ENCODE measurements at regions of chr16 and their contacts with region 1.

Region 1: DNA sequence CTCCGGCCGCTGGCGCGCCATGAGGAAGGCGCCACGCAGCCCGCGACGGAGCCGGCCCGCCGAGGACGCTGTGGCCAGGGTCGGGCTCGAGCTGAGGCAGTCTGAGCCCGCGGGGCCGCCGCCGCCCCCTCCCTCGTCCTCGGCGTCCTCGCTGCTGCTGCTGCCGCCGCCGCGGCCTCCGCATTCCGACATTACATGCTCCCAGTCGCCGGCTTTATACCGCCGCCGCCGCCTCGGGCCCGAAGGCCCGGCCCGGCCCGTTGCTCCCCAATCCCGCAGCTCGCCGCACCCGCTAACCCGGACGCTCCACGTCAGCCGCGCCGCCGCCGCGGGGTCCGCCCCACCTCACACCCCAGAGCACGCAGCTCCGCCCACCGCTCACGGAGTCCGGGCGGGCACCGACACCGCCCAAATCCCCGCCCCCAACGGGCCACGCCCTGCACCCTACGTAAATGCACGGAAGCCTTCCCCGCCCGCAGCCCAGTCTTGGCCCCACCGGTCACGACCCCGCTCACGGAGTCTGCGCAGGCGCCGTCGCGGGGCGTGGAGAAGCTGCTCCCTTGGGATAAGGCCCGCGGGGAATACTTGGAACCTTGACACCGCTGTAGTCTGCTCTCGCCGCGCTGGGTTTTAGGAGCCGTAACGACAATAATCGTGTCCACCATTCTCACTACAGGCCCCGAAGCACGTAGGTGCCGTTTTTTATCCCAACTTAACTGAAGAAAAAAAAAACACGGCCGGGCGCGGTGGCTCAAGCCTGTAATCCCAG is at the start of gene TXNDC11:
- DNase-seq: peak; percentile 100
- H3K4me3 Mint-ChIP-seq: peak within 1 kb of the TSS; percentile 98
- H3K27ac Mint-ChIP-seq: peak within 1 kb of the TSS; percentile 97
- H3K4me1 Mint-ChIP-seq: peaks cover 48% of the 10 kb centered on the region
- H3K27me3 Mint-ChIP-seq: no peaks in the 10 kb centered on the region
- total RNA-seq, gene TXNDC11: 41.7 and 43.6 TPM in 2 replicates

Region 2: GRCh38 chr16:10944249-10945064 is 798.3 kb before region 1 on chr16 and contains the start of gene CLEC16A:
- intact Hi-C with region 1: loop called (anchors 5 kb)
- DNase-seq: peak; percentile 99
- H3K4me3 Mint-ChIP-seq: peak within 1 kb of the TSS; percentile 84
- H3K27ac Mint-ChIP-seq: peak within 1 kb of the TSS; percentile 79
- H3K4me1 Mint-ChIP-seq: peaks cover 56% of the 10 kb centered on the region
- H3K27me3 Mint-ChIP-seq: no peaks in the 10 kb centered on the region
- total RNA-seq, gene CLEC16A: 35.9 and 36.2 TPM in 2 replicates

Region 3: DNA sequence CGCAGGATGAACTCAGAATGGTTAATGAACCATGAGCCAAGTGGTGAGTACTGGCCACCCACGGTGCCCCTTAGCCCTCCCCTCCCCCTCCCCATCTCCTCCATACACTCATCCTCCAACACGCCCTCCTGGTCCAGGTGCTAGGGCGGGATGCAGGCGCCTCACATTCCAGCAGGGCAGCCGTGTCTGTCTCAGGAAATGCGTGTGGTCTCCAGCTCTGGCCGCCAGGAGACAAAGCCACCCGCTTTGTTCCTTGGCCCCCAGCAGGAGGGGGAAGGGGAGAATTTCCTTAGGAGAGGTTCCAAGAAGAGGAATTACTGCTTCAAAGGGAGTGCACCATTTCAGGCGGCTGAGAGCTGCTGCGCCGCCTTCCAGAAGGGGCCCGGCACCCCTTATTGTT is 427.2 kb before region 1 on chr16:
- intact Hi-C with region 1: no loop called
- DNase-seq: no peak
- H3K4me3 Mint-ChIP-seq: no peak overlapping the region
- H3K27ac Mint-ChIP-seq: no peak overlapping the region
- H3K4me1 Mint-ChIP-seq: peaks cover 54% of the 10 kb centered on the region
- H3K27me3 Mint-ChIP-seq: no peaks in the 10 kb centered on the region

Region 4: DNA sequence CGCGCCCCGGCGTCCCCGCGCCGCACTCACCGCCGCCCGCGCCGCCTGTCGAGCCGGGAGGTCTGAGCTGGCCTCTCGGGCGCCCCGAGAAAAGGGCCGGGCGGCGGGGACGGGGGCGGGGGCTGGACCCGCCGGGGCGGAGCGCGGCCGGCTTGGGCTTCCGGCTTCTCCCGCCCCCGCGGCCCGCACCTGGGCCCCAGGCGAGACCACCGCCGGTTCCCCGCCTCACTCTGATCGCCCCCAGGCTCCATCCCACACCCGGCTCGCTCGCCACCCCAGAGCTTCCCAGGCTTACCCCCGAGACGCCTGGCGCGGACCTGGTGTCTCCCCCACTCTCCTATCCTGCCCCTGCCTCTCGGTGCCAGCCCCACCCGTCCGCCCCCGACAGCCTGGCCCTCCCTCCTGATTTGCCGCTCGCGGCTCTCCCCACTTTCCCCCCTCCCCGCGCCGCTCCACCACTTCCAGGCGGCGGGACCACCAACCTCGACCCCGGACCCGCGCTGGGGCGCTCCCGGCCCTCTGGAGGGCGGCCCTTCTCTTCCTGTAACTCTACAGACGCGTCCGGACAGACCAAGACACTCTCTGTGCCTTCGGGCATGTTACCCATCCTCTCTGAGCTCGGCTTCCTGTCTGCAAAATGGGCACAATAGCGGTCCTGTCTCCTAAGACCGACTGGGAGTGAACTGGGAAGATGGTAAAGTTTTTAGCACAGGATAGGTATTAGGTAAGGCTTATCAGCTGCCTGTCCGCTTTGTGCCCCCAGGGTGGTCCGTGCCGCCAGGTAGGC is 155.7 kb before region 1 on chr16 and contains the start of gene LITAF:
- intact Hi-C with region 1: loop called (anchors 5 kb)
- DNase-seq: peak; percentile 87
- H3K4me3 Mint-ChIP-seq: peak within 1 kb of the TSS; percentile 90
- H3K27ac Mint-ChIP-seq: peak within 1 kb of the TSS; percentile 89
- H3K4me1 Mint-ChIP-seq: peaks cover 38% of the 10 kb centered on the region
- H3K27me3 Mint-ChIP-seq: peaks cover 3% of the 10 kb centered on the region
- total RNA-seq, gene LITAF: 163 and 170 TPM in 2 replicates

Region 5: GRCh38 chr16:11669380-11670146 is 73.2 kb before region 1 on chr16:
- intact Hi-C with region 1: loop called (anchors 2 kb)
- DNase-seq: peak; percentile 62
- H3K4me3 Mint-ChIP-seq: peak overlapping the region; percentile 80
- H3K27ac Mint-ChIP-seq: peak overlapping the region; percentile 80
- H3K4me1 Mint-ChIP-seq: peaks cover 58% of the 10 kb centered on the region
- H3K27me3 Mint-ChIP-seq: no peaks in the 10 kb centered on the region

Region 6: DNA sequence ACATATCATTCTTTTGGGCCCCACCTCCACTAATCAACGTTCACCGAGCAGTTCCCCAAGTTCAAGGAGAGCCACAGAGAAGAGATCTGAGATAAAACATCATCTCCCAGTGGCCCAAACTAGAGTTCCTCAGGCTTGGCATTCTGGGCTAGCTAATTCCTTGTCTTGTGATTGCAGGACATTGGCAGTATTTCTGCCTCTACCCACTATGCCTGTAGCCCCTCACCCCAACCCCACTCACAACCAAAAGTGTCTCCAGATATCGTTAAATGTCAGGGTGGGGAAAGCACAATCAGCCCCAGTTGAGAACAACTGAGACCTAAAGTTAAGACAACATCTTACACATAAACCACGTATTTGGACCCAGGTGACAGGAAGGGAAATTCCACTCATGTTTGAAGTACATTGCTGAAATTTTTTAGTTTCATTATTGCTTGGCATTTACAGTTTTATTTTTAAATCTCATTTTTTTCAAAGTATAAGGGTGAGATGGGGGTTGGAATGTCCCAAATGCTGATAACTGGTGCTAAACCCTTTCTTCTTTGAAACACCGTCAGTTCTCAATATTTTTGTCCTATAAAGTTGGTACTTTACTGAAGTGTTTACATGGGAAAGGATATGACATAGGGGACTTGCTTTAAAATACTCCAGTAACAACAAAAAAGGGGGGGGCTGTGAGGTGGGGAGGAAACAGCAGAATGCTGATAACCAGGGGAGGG is 40.8 kb after region 1 on chr16:
- intact Hi-C with region 1: loop called (anchors 1 kb)
- DNase-seq: peak; percentile 89
- H3K4me3 Mint-ChIP-seq: peak overlapping the region; percentile 82
- H3K27ac Mint-ChIP-seq: peak overlapping the region; percentile 97
- H3K4me1 Mint-ChIP-seq: peaks cover 61% of the 10 kb centered on the region
- H3K27me3 Mint-ChIP-seq: no peaks in the 10 kb centered on the region

Region 7: DNA sequence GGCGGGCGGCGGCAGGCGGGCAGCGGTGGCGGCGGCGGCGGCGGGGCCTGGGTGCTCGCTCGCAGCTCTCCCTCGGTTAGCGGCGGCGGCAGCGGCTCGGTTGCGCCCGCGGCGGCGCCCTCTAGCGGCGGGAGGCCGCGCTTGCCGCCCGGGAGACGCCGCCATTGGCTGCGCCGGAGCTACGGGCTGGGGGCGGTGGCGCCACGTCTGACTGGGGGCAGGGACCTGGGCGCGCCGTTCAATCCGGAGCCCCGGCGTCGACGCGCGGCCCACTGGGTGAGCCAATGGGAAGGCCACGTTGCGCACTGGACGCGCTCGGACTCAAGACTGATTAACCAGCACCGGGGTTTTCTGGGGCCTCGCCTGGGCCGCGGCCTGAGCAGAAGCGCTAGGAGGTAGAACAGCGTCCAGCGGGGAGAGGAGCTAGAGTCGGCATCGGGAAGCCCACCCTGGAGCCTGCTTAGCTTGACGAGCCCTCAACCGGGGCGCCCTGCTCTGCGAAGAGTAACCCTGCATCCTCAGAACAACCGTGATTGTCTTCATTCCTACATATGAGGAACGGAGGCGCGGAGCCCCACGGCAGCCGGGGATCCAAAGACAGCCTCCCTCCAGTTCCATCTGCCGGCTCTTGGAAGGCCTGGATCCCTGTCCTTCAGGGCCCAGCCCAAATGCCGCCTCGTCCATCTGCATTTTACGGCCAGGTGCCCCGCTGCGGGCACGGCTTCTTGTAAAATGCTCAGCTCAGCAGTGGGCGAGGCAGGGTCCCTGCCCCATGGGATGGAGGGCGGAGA is 54.6 kb after region 1 on chr16 and contains the start of gene ZC3H7A:
- intact Hi-C with region 1: loop called (anchors 1 kb)
- DNase-seq: peak; percentile 98
- H3K4me3 Mint-ChIP-seq: peak within 1 kb of the TSS; percentile 93
- H3K27ac Mint-ChIP-seq: peak within 1 kb of the TSS; percentile 95
- H3K4me1 Mint-ChIP-seq: peaks cover 69% of the 10 kb centered on the region
- H3K27me3 Mint-ChIP-seq: no peaks in the 10 kb centered on the region
- total RNA-seq, gene ZC3H7A: 58.3 and 64.1 TPM in 2 replicates

Region 8: DNA sequence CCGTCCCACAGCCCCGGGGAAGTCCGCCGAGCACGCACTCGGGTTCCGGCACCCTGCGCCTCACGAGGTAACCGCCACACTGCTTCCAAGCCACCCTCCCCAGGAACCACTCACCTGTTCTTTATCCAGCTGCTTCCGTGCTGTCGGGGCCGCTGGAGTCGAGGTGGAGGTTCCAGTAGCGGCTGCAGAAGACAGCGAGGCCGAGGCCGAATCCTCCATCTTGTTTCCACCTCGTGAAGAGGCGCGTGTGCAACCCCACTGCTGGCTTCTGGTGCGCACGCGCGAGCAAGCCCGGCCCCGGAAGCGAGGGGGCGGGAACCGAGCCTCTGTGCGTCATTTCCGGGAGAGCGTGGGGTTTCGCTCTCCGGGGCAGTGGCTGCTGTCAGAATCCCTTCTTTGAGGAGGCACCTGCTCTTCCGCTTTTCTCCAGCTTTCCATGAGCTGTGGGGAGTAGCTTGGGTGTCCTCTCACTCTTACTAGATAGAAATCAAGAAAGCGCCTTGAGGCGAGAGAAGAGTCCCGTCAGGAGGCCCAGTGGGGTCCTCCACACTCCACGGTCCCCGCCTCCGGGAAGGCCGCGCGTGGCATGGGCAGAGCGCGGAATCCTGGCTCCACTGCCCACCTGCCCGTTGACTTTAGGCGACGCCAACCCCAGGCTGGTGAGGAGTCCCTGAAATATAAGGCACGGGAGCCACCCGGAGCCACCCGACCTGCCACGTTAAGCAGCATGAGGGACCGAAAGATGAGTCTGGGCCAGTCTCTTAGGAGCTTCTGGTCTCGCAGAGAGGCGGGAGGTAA is 108.8 kb after region 1 on chr16 and contains the start of gene RSL1D1:
- intact Hi-C with region 1: loop called (anchors 1 kb)
- DNase-seq: peak; percentile 99
- H3K4me3 Mint-ChIP-seq: peak within 1 kb of the TSS; percentile 99
- H3K27ac Mint-ChIP-seq: peak within 1 kb of the TSS; percentile 98
- H3K4me1 Mint-ChIP-seq: peaks cover 47% of the 10 kb centered on the region
- H3K27me3 Mint-ChIP-seq: no peaks in the 10 kb centered on the region
- total RNA-seq, gene RSL1D1: 375 and 379 TPM in 2 replicates

Region 9: GRCh38 chr16:12132290-12132689 is 389.6 kb after region 1 on chr16:
- intact Hi-C with region 1: no loop called
- DNase-seq: no peak
- H3K4me3 Mint-ChIP-seq: no peak overlapping the region
- H3K27ac Mint-ChIP-seq: no peak overlapping the region
- H3K4me1 Mint-ChIP-seq: no peaks in the 10 kb centered on the region
- H3K27me3 Mint-ChIP-seq: no peaks in the 10 kb centered on the region

Measured in activated CD4-positive, alpha-beta T cell treated with anti-CD3 and anti-CD28 coated beads, Interleukin-2, amount 10 ng/mL, durations not matched to agents 24 days and 14 days (primary cell).